Heart left ventricle (tissue), 16 donors: ENCODE measurements at regions of chr4 and their contacts with region 1.

Region 1: DNA sequence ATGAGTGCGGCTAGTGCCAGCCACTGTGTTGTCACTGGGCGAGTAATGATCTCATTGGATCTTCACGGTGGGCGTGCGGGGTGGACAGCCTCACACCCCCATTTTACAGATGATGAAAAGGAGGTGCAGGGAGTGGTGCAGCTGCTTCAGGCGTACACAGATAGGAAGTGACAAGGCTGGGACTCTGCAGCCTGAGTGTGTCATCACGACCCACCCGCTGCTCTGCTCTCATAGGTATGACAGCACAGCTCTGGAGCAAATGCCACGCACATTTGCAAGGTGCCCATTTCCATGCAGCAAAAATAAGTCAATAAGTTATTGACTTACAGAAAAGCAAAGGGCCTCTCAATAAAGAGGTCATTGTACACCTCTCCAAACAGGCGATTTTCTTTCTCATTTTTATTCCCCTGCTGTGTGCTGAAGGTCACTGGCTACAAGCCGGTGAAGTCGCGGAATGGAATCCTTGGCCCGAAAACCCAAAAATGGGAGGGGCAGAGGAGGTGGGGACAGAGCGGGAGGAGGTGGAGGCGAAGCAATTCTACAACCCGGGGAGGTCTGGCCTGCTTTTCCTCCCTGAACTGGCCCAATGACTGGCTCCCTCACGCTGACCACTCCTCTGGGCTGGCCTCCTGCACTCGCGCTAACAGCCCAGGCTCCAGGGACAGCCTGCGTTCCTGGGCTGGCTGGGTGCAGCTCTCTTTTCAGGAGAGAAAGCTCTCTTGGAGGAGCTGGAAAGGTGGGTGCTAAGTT is at the start of gene SOD3:
- DNase-seq: peak; percentile 86 to 90 (median 88)
- ATAC-seq: peak; percentile 96 to 97 (median 96)
- H3K4me3 ChIP-seq: peak within 1 kb of the TSS in 11 of 12 donors; percentile 1 to 60 (median 45)
- H3K27ac ChIP-seq: peak within 1 kb of the TSS; percentile 53 to 92 (median 82)
- H3K4me1 ChIP-seq: peaks cover 0 to 34% (median 14%) of the 10 kb centered on the region in 12 donors
- H3K27me3 ChIP-seq: peaks cover 0 to 14% (median 6%) of the 10 kb centered on the region in 9 donors
- CTCF ChIP-seq: no peak
- POLR2A ChIP-seq: peak in 1 of 2 donors; percentile 63
- total RNA-seq, gene SOD3: 17.0 to 110 (median 43.0) TPM

Region 2: GRCh38 chr4:24584175-24584850 is 210.8 kb before region 1 on chr4 and contains the start of gene DHX15:
- intact Hi-C with region 1: loop called in 3 of 10 experiments (anchors 10 kb)
- DNase-seq: peak; percentile 96 to 97 (median 97)
- ATAC-seq: peak; percentile 93 to 98 (median 96)
- H3K4me3 ChIP-seq: peak within 1 kb of the TSS; percentile 73 to 100 (median 97)
- H3K27ac ChIP-seq: peak within 1 kb of the TSS; percentile 90 to 99 (median 98)
- H3K4me1 ChIP-seq: peaks cover 8 to 47% (median 31%) of the 10 kb centered on the region in 12 donors
- H3K27me3 ChIP-seq: no peaks in the 10 kb centered on the region
- CTCF ChIP-seq: no peak
- POLR2A ChIP-seq: no peak
- total RNA-seq, gene DHX15: 45.4 to 67.8 (median 58.0) TPM

Region 3: DNA sequence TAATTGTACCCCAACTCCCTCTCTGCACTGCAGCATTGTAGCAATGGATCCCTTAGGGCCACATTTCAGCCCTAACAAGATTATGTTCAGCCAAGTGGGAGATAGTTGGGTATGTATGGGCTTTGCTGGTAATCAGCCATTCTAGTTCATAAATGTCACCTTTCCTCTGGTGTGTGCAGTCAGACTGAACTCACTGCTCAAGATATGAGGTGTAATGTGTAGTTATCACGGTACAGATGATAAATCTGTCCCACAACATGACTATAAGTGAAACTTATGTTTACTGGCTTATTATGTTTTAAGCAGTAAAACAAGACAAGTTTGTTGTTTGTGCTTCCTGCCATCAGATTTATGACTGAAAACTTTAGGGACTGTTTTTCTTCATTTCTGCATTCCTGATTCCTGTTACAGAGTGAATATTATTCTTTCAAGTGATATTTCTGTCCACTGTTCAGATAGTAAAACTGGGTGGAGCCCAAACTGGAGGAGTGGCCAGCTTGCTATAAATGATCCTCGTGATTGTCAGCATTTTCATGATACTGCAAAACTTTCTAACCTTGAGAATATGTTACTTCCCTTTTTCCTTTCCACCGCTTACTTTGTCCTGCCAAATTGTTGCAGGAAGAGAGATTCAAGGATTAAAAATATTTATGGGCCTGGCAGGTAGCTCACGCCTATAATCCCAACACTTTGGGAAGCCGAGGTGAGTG is 626.9 kb after region 1 on chr4:
- intact Hi-C with region 1: no loop called
- DNase-seq: no peak
- ATAC-seq: no peak
- H3K4me3 ChIP-seq: no peak overlapping the region
- H3K27ac ChIP-seq: peak overlapping the region in 1 of 12 donors; percentile 16
- H3K4me1 ChIP-seq: peaks cover 0 to 31% (median 11%) of the 10 kb centered on the region in 12 donors
- H3K27me3 ChIP-seq: no peaks in the 10 kb centered on the region
- CTCF ChIP-seq: no peak
- POLR2A ChIP-seq: no peak